B cell (primary cell): ENCODE measurements at regions of chr17 and their contacts with region 1.

Region 1: GRCh38 chr17:16537130-16537458 is 31.9 kb downstream of the ZNF287 start:
- DNase-seq: no peak
- ATAC-seq: no peak
- H3K4me3 ChIP-seq: no peak overlapping the region
- H3K4me3 Mint-ChIP-seq: peak overlapping the region; percentile 98
- H3K27ac ChIP-seq: no peak overlapping the region
- H3K27ac Mint-ChIP-seq: peak overlapping the region; percentile 99
- H3K4me1 ChIP-seq: peaks cover 9 to 13% of the 10 kb centered on the region in 2 donors
- H3K4me1 Mint-ChIP-seq: peaks cover 18% of the 10 kb centered on the region
- H3K27me3 ChIP-seq: no peaks in the 10 kb centered on the region
- H3K27me3 Mint-ChIP-seq: no peaks in the 10 kb centered on the region
- CTCF ChIP-seq: no peak

Region 2: GRCh38 chr17:15966183-15966878 is 570.8 kb before region 1 on chr17:
- CTCF ChIA-PET with region 1: no interaction called
- POLR2A ChIA-PET with region 1: no interaction called
- intact Hi-C with region 1: no loop called
- DNase-seq: no peak
- ATAC-seq: no peak
- H3K4me3 ChIP-seq: no peak overlapping the region
- H3K4me3 Mint-ChIP-seq: no peak overlapping the region
- H3K27ac ChIP-seq: no peak overlapping the region
- H3K27ac Mint-ChIP-seq: no peak overlapping the region
- H3K4me1 ChIP-seq: peaks cover 0 to 10% of the 10 kb centered on the region in 2 donors
- H3K4me1 Mint-ChIP-seq: peaks cover 11% of the 10 kb centered on the region
- H3K27me3 ChIP-seq: peaks cover 0 to 28% (median 2%) of the 10 kb centered on the region in 4 experiments
- H3K27me3 Mint-ChIP-seq: peaks cover 34% of the 10 kb centered on the region
- CTCF ChIP-seq: no peak

Region 3: DNA sequence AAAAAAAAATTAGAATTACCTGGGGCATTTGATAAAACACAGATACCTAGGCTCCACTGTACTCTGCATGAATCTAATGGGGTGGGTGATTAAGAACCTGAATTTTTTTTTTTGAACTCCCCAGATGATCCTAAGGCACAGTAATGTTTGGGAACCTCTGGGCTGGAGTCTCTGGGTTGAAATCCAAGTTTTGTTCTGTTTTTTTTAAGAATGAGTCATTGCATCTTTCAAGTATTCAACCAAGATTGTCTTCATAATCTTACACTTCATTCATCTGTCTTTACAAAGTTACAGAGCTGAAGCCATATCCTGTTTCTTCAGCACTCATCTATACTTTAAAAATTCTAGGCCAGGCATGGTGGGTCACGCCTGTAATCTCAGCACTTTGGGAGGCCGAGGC is 267.4 kb before region 1 on chr17:
- CTCF ChIA-PET with region 1: no interaction called
- POLR2A ChIA-PET with region 1: no interaction called
- intact Hi-C with region 1: no loop called
- DNase-seq: no peak
- ATAC-seq: no peak
- H3K4me3 ChIP-seq: no peak overlapping the region
- H3K4me3 Mint-ChIP-seq: no peak overlapping the region
- H3K27ac ChIP-seq: no peak overlapping the region
- H3K27ac Mint-ChIP-seq: peak overlapping the region; percentile 41
- H3K4me1 ChIP-seq: peaks cover 21 to 41% of the 10 kb centered on the region in 2 donors
- H3K4me1 Mint-ChIP-seq: peaks cover 30% of the 10 kb centered on the region
- H3K27me3 ChIP-seq: no peaks in the 10 kb centered on the region
- H3K27me3 Mint-ChIP-seq: no peaks in the 10 kb centered on the region
- CTCF ChIP-seq: no peak

Region 4: GRCh38 chr17:16353317-16354174 is 183.5 kb before region 1 on chr17 and contains the start of gene CENPV:
- CTCF ChIA-PET with region 1: interaction called, 3 read pairs
- POLR2A ChIA-PET with region 1: interaction called, 4 read pairs
- intact Hi-C with region 1: loop called (anchors 5 kb)
- DNase-seq: peak; percentile 86
- ATAC-seq: peak; percentile 87
- H3K4me3 ChIP-seq: peak within 1 kb of the TSS; percentile 51 to 78 (median 70)
- H3K4me3 Mint-ChIP-seq: peak within 1 kb of the TSS; percentile 94
- H3K27ac ChIP-seq: peak within 1 kb of the TSS in 1 of 2 donors; percentile 56
- H3K27ac Mint-ChIP-seq: peak within 1 kb of the TSS; percentile 80
- H3K4me1 ChIP-seq: peaks cover 8 to 16% of the 10 kb centered on the region in 2 donors
- H3K4me1 Mint-ChIP-seq: peaks cover 15% of the 10 kb centered on the region
- H3K27me3 ChIP-seq: no peaks in the 10 kb centered on the region
- H3K27me3 Mint-ChIP-seq: no peaks in the 10 kb centered on the region
- CTCF ChIP-seq: no peak
- total RNA-seq, gene CENPV: 15.8 and 17.7 TPM in 2 replicates

Region 5: GRCh38 chr17:16380640-16381495 is 156.2 kb before region 1 on chr17 and contains the start of gene UBB:
- CTCF ChIA-PET with region 1: interaction called, 3 read pairs
- POLR2A ChIA-PET with region 1: interaction called, 9 read pairs
- intact Hi-C with region 1: loop called (anchors 5 kb)
- DNase-seq: peak; percentile 97
- ATAC-seq: peak; percentile 89
- H3K4me3 ChIP-seq: peak within 1 kb of the TSS; percentile 73 to 96 (median 91)
- H3K4me3 Mint-ChIP-seq: peak within 1 kb of the TSS; percentile 84
- H3K27ac ChIP-seq: peak within 1 kb of the TSS; percentile 97 to 98
- H3K27ac Mint-ChIP-seq: peak within 1 kb of the TSS; percentile 97
- H3K4me1 ChIP-seq: peaks cover 32 to 43% of the 10 kb centered on the region in 2 donors
- H3K4me1 Mint-ChIP-seq: peaks cover 45% of the 10 kb centered on the region
- H3K27me3 ChIP-seq: no peaks in the 10 kb centered on the region
- H3K27me3 Mint-ChIP-seq: no peaks in the 10 kb centered on the region
- CTCF ChIP-seq: no peak
- total RNA-seq, gene UBB: 765 and 769 TPM in 2 replicates

Region 6: GRCh38 chr17:16463358-16464302 is 73.5 kb before region 1 on chr17:
- CTCF ChIA-PET with region 1: no interaction called
- POLR2A ChIA-PET with region 1: no interaction called
- intact Hi-C with region 1: no loop called
- DNase-seq: no peak
- ATAC-seq: no peak
- H3K4me3 ChIP-seq: no peak overlapping the region
- H3K4me3 Mint-ChIP-seq: no peak overlapping the region
- H3K27ac ChIP-seq: no peak overlapping the region
- H3K27ac Mint-ChIP-seq: no peak overlapping the region
- H3K4me1 ChIP-seq: no peaks in the 10 kb centered on the region
- H3K4me1 Mint-ChIP-seq: no peaks in the 10 kb centered on the region
- H3K27me3 ChIP-seq: no peaks in the 10 kb centered on the region
- H3K27me3 Mint-ChIP-seq: no peaks in the 10 kb centered on the region
- CTCF ChIP-seq: no peak

Region 7: GRCh38 chr17:16521070-16521727 is 15.9 kb before region 1 on chr17:
- CTCF ChIA-PET with region 1: interaction called, 15 read pairs
- POLR2A ChIA-PET with region 1: interaction called, 3 read pairs
- intact Hi-C with region 1: no loop called
- DNase-seq: peak; percentile 80
- ATAC-seq: peak; percentile 88
- H3K4me3 ChIP-seq: no peak overlapping the region
- H3K4me3 Mint-ChIP-seq: no peak overlapping the region
- H3K27ac ChIP-seq: no peak overlapping the region
- H3K27ac Mint-ChIP-seq: no peak overlapping the region
- H3K4me1 ChIP-seq: peaks cover 0 to 4% of the 10 kb centered on the region in 2 donors
- H3K4me1 Mint-ChIP-seq: peaks cover 7% of the 10 kb centered on the region
- H3K27me3 ChIP-seq: peaks cover 0 to 18% (median 7%) of the 10 kb centered on the region in 4 experiments
- H3K27me3 Mint-ChIP-seq: peaks cover 51% of the 10 kb centered on the region
- CTCF ChIP-seq: peak; percentile 86

Region 8: DNA sequence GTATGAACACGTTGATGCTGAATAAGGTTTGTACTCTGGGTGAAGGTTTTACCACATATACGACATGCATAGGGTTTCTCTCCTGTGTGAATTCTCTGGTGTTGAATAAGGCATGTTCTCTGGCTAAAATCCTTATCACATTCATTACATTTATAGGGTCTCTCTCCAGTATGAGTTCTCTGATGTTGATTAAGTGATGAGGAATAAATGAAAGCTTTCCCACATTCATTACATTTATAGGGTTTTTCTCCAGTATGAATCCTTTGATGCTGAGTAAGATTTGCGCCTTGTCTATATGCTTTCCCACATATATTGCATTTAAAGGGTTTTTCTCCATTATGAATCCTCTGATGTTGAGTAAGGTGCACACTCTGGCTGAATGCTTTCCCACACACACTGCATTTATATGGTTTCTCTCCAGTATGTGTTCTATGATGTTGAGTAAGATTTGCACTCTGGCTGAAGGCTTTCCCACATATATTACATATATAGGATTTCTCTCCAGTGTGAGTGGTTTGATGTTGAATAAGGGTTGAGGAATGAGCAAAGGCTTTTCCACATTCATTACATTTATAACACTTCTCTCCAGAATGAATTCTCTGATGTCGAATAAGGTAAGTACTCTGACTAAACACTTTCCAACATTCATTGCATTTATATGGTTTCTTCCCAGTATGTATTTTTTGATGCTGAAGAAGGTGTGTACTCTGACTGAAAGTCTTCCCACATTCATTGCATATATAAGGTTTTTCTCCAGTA is 15.0 kb after region 1 on chr17:
- CTCF ChIA-PET with region 1: no interaction called
- POLR2A ChIA-PET with region 1: no interaction called
- intact Hi-C with region 1: no loop called
- DNase-seq: no peak
- ATAC-seq: no peak
- H3K4me3 ChIP-seq: no peak overlapping the region
- H3K4me3 Mint-ChIP-seq: no peak overlapping the region
- H3K27ac ChIP-seq: no peak overlapping the region
- H3K27ac Mint-ChIP-seq: no peak overlapping the region
- H3K4me1 ChIP-seq: no peaks in the 10 kb centered on the region
- H3K4me1 Mint-ChIP-seq: no peaks in the 10 kb centered on the region
- H3K27me3 ChIP-seq: no peaks in the 10 kb centered on the region
- H3K27me3 Mint-ChIP-seq: no peaks in the 10 kb centered on the region
- CTCF ChIP-seq: no peak

Region 9: GRCh38 chr17:16568541-16569357 is 31.7 kb after region 1 on chr17 and contains the start of gene ZNF287:
- CTCF ChIA-PET with region 1: interaction called, 13 read pairs
- POLR2A ChIA-PET with region 1: interaction called, 6 read pairs
- intact Hi-C with region 1: loop called (anchors 1 kb)
- DNase-seq: peak; percentile 97
- ATAC-seq: peak; percentile 97
- H3K4me3 ChIP-seq: peak within 1 kb of the TSS; percentile 7 to 77 (median 69)
- H3K4me3 Mint-ChIP-seq: peak within 1 kb of the TSS; percentile 83
- H3K27ac ChIP-seq: peak within 1 kb of the TSS; percentile 39 to 83
- H3K27ac Mint-ChIP-seq: peak within 1 kb of the TSS; percentile 92
- H3K4me1 ChIP-seq: peaks cover 16 to 18% of the 10 kb centered on the region in 2 donors
- H3K4me1 Mint-ChIP-seq: peaks cover 15% of the 10 kb centered on the region
- H3K27me3 ChIP-seq: no peaks in the 10 kb centered on the region
- H3K27me3 Mint-ChIP-seq: no peaks in the 10 kb centered on the region
- CTCF ChIP-seq: no peak
- total RNA-seq, gene ZNF287: 16.6 and 19.3 TPM in 2 replicates

Region 10: DNA sequence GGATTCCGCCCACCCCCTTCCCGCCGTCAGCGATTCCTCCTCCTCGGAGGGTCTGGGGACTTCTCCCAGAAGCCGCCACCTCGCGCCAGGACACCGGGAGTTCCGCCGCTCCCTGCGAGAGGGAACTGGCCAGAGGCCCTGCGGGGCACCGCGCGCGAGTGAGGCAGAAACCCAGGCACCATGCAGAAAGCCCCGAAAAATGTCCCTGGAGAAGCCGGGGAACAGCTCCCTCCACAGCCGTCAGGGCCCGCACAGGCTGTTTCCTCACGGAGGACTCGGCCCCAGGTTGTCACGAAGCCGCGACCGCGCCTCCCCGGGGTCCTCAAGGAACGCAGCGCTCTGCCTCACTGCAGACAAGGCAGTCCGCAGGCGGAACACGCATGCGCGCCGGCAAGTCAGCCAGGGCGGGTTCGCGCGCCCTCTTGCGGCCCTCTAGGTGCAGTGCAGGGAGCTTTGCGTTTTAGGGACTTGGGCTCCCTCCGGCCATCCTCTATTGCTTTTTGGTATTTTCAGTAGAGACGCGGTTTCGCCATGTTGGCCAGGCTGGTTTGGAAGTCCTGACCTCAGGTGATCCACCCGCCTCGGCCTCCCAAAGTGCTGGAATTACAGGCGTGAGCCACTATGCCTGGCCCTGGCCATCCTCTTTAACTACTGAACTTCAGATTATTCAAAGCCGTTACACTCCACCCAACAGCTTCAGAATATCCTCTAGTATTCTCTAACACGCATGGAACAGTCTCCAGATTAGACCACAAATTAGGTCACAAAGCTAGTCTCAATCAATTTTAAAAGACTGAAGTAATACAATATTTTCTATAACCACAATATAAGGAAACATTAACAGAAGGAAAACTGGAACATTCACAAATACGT is 52.2 kb after region 1 on chr17:
- CTCF ChIA-PET with region 1: interaction called, 68 read pairs
- POLR2A ChIA-PET with region 1: interaction called, 13 read pairs
- intact Hi-C with region 1: loop called (anchors 1 kb)
- DNase-seq: peak; percentile 92
- ATAC-seq: peak; percentile 98
- H3K4me3 ChIP-seq: peak overlapping the region; percentile 38 to 66 (median 56)
- H3K4me3 Mint-ChIP-seq: peak overlapping the region; percentile 82
- H3K27ac ChIP-seq: no peak overlapping the region
- H3K27ac Mint-ChIP-seq: no peak overlapping the region
- H3K4me1 ChIP-seq: peaks cover 12 to 15% of the 10 kb centered on the region in 2 donors
- H3K4me1 Mint-ChIP-seq: peaks cover 8% of the 10 kb centered on the region
- H3K27me3 ChIP-seq: peaks cover 0 to 30% (median 14%) of the 10 kb centered on the region in 4 experiments
- H3K27me3 Mint-ChIP-seq: peaks cover 51% of the 10 kb centered on the region
- CTCF ChIP-seq: peak; percentile 97

Region 11: GRCh38 chr17:16653209-16654041 is 116.3 kb after region 1 on chr17 and contains the start of gene ZNF624:
- CTCF ChIA-PET with region 1: interaction called, 3 read pairs
- POLR2A ChIA-PET with region 1: interaction called, 3 read pairs
- intact Hi-C with region 1: loop called (anchors 2 kb)
- DNase-seq: peak; percentile 91
- ATAC-seq: peak; percentile 95
- H3K4me3 ChIP-seq: peak within 1 kb of the TSS; percentile 54 to 96 (median 86)
- H3K4me3 Mint-ChIP-seq: peak within 1 kb of the TSS; percentile 94
- H3K27ac ChIP-seq: peak within 1 kb of the TSS; percentile 39 to 78
- H3K27ac Mint-ChIP-seq: peak within 1 kb of the TSS; percentile 87
- H3K4me1 ChIP-seq: peaks cover 6 to 11% of the 10 kb centered on the region in 2 donors
- H3K4me1 Mint-ChIP-seq: peaks cover 16% of the 10 kb centered on the region
- H3K27me3 ChIP-seq: peaks cover 0 to 5% (median 1%) of the 10 kb centered on the region in 4 experiments
- H3K27me3 Mint-ChIP-seq: peaks cover 7% of the 10 kb centered on the region
- CTCF ChIP-seq: no peak
- total RNA-seq, gene ZNF624: 12.0 and 13.5 TPM in 2 replicates